Activated CD4-positive, alpha-beta memory T cell treated with anti-CD3 and anti-CD28 coated beads for 36 hours (primary cell): ENCODE measurements at regions of chr16 and their contacts with region 1.

Region 1: DNA sequence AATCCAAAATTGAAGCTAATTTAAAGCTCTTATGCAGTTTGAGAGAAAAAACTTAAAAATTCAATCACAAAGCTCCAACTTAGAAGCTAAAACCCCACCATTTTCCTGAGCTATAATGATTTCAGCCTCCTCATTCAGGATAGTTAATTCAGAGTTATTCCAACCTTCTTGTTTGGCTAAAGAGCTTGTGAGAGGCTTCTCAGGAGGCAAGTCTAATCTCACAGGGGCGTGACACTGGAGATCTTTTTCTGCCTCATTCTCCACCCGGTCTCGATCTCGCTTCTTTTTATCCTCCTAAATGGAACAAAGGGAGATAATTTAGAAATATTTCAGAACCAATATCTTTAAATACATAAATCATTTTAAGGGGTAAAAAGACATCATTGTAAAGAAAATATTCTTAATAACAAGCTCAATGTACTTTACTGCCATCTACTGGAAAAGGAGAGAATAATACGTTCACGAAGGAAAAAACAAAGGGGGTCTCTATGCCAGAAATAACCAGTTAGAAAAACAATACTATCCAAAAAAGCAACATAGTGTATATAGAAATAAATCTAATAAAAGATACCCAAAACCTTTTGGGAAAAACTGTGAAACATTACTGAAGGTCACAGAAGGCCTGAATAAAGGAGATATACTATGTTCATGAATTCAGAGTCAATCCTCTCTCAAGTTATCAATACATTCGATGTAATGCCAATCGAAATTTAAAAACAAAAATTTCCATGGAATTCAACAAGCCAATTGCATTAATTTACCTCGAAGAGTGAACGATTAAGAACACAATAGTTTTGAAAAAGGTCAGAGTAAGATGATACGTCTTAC is 13.9 kb downstream of the BRD7 start:
- DNase-seq: no peak
- H3K4me3 Mint-ChIP-seq: no peak overlapping the region
- H3K27ac Mint-ChIP-seq: no peak overlapping the region
- H3K4me1 Mint-ChIP-seq: peaks cover 30% of the 10 kb centered on the region
- H3K27me3 Mint-ChIP-seq: no peaks in the 10 kb centered on the region

Region 2: GRCh38 chr16:50228364-50228868 is 126.4 kb before region 1 on chr16:
- CTCF ChIA-PET with region 1: interaction called, 16 read pairs
- POLR2A ChIA-PET with region 1: no interaction called
- intact Hi-C with region 1: no loop called
- DNase-seq: no peak
- H3K4me3 Mint-ChIP-seq: no peak overlapping the region
- H3K27ac Mint-ChIP-seq: no peak overlapping the region
- H3K4me1 Mint-ChIP-seq: no peaks in the 10 kb centered on the region
- H3K27me3 Mint-ChIP-seq: no peaks in the 10 kb centered on the region